Head of caudate nucleus (tissue), 42 donors: ENCODE measurements at regions of chr13 and their contacts with region 1.

Region 1: GRCh38 chr13:41193919-41194824 is at the start of gene KBTBD7:
- DNase-seq: peak; percentile 87 to 99 (median 96)

Region 2: GRCh38 chr13:41061075-41061913 is 132.9 kb before region 1 on chr13 and contains the start of gene WBP4:
- intact Hi-C with region 1: loop called (anchors 5 kb)
- DNase-seq: peak; percentile 81 to 98 (median 93)

Region 3: DNA sequence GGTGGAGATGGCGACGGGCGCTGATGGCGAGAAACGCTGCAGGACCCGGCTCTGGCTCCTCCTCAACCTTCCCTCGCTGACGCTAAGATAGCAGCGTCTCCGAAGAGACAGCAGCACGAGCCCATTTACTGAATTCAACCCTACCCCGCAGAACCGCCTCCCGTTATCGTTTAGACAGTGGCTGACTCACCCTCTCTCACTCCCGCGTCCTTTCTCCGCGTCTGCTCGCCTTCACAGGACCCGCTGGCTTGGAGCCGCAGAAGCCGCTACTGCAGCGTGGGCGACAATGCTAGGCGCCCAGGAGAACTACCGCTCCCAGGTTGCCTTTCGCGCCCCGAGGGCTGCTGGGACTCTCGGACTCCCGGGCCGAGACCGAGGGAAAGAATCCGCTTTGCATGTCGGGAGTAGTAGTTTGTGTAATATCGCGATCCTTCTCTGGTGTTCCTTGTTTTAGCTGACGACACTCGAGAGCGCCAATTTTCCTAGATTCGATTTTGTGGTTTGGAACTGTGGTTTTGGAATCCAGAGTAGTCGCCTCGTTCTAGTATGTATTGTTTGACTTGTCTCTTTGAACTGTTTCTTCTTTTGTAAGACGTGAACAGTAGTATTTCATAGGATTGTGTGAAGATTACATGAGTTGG is 61.5 kb before region 1 on chr13 and contains the start of gene KBTBD6:
- intact Hi-C with region 1: loop called (anchors 1 kb)
- DNase-seq: peak; percentile 95 to 99 (median 98)

Region 4: GRCh38 chr13:41263261-41264027 is 69.3 kb after region 1 on chr13 and contains the start of gene MTRF1:
- intact Hi-C with region 1: loop called (anchors 5 kb)
- DNase-seq: peak; percentile 79 to 96 (median 90)